ENCODE measurements at regions of chr18 and their contacts with region 1.

Region 1: GRCh38 chr18:33751613-33752221 is 173.7 kb downstream of the ASXL3 start:
- DNase-seq: no peak
- ATAC-seq: no peak
- H3K4me3 ChIP-seq: no peak overlapping the region
- H3K27ac ChIP-seq: no peak overlapping the region
- H3K4me1 ChIP-seq: peaks cover 0 to 9% (median 0%) of the 10 kb centered on the region in 12 donors
- H3K27me3 ChIP-seq: no peaks in the 10 kb centered on the region
- CTCF ChIP-seq: peak in 11 of 12 donors; percentile 17 to 56 (median 31)
- POLR2A ChIP-seq: no peak

Region 2: DNA sequence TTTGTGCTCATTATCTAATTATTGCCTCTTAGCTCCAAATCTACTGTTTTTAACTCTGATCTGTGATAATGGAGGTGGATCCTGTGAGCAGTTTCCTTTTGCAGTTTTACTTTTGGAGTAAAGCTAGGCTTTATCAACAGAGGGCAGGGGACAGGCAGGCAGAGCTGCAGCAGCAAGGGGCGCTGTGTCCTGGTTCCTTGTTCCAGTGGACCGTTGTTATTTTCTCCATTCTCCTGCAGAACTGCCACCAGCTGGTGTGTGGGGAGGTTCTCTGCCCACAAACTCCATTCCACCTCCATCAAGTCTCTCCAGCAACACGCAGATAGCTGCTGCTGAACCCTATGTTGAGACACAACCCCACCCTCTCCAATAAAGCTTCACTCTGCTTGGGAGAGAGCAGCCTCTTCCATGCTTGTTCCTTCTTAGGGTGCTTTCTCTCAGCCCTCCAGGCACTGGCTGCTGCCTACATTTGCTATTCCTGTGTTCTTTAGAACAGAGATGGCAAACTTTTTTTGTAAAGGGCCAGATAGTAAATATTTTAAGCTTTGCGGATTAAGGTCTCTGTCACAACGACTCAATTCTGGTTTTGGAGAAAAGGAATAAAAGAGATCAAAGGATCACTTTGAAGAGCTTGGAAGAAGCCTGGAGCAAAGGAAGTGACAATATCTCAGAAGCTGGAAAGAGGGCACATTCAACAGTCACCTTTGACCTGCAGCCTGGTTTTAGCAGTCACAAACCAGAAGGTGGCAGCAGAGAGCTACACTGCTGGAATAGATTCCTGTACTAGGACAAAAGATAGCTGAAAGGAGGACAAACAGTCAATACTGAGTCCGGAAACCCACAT is 520.0 kb before region 1 on chr18:
- intact Hi-C with region 1: loop called in 2 of 10 experiments (anchors 5 to 10 kb)
- DNase-seq: peak in 4 of 5 donors; percentile 46 to 63 (median 48)
- ATAC-seq: peak; percentile 42 to 73 (median 68)
- H3K4me3 ChIP-seq: no peak overlapping the region
- H3K27ac ChIP-seq: no peak overlapping the region
- H3K4me1 ChIP-seq: no peaks in the 10 kb centered on the region
- H3K27me3 ChIP-seq: no peaks in the 10 kb centered on the region
- CTCF ChIP-seq: peak; percentile 75 to 93 (median 83)
- POLR2A ChIP-seq: no peak

Region 3: DNA sequence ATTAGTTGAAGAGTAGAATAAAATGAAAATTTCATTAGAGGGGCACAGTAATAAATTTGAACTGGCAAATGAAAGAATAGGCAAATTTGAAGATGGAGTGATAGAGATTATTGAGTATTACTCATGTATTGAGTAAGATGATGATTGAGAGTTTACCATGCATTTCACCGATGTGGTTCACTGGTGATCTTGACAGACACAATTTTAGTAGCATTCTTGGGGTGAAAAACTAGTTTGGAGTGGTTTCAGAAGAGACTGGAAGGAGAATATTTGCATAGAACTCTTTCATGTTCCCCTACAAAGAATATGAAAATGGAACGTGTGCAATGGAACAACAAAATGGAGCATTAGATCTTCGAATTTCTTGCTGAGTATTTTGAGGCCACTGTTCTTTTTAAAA is 52.3 kb before region 1 on chr18:
- intact Hi-C with region 1: loop called in 2 of 10 experiments (anchors 10 kb)
- DNase-seq: no peak
- ATAC-seq: no peak
- H3K4me3 ChIP-seq: no peak overlapping the region
- H3K27ac ChIP-seq: no peak overlapping the region
- H3K4me1 ChIP-seq: no peaks in the 10 kb centered on the region
- H3K27me3 ChIP-seq: no peaks in the 10 kb centered on the region
- CTCF ChIP-seq: no peak
- POLR2A ChIP-seq: no peak

Region 4: GRCh38 chr18:33804258-33804657 is 52.5 kb after region 1 on chr18:
- intact Hi-C with region 1: loop called in 1 of 10 experiments (anchors 10 kb)
- DNase-seq: no peak
- ATAC-seq: no peak
- H3K4me3 ChIP-seq: no peak overlapping the region
- H3K27ac ChIP-seq: no peak overlapping the region
- H3K4me1 ChIP-seq: no peaks in the 10 kb centered on the region
- H3K27me3 ChIP-seq: no peaks in the 10 kb centered on the region
- CTCF ChIP-seq: no peak
- POLR2A ChIP-seq: no peak

Region 5: GRCh38 chr18:34122724-34123334 is 371.1 kb after region 1 on chr18:
- intact Hi-C with region 1: no loop called
- DNase-seq: peak in 2 of 5 donors; percentile 8 to 13
- ATAC-seq: peak in 1 of 4 donors; percentile 65
- H3K4me3 ChIP-seq: no peak overlapping the region
- H3K27ac ChIP-seq: no peak overlapping the region
- H3K4me1 ChIP-seq: no peaks in the 10 kb centered on the region
- H3K27me3 ChIP-seq: no peaks in the 10 kb centered on the region
- CTCF ChIP-seq: peak; percentile 68 to 92 (median 81)
- POLR2A ChIP-seq: no peak